ENCODE measurements at regions of chr9 and their contacts with region 1.

Region 1: GRCh38 chr9:89000973-89001916 is 10.0 kb downstream of the S1PR3 start:
- DNase-seq: peak; percentile 77 to 95 (median 88)

Region 2: DNA sequence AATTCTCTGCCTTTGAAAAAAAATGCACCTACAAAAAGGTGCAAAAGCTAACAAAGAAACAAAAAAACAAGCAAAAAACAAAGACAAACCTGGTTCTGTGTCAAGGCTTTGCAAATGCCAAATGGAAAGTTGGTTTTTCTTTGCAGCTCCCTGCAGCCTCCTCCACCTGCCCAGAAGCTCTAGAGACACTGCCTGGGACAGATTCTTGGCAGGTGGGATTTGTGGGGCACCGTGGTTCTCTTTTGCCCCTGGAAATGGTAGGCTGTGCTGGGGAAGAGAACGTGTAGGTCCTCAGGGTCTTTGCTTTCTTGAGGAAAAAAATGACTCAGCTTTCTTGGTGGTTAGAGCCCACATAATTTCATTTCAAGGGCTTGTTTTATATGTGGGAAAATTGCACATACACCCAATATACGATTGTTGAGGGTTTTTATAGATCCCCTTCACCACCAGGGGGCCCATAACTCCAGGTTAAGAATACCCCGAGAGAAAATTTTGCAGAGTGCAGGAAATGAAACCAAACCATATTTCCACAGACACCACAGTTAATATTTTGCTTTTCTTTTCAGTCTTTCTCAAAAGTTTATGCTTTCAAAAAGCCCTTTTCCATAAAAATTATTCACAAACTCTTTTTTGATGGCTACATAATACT is 407.6 kb before region 1 on chr9:
- intact Hi-C with region 1: loop called (anchors 5 kb)
- DNase-seq: peak in 27 of 42 donors; percentile 20 to 80 (median 56)

Region 3: GRCh38 chr9:88949425-88949824 is 51.8 kb before region 1 on chr9:
- intact Hi-C with region 1: no loop called
- DNase-seq: peak in 29 of 42 donors; percentile 5 to 77 (median 33)

Measured in head of caudate nucleus (tissue), 42 donors.